ENCODE measurements at regions of chr2 and their contacts with region 1.

Region 1: GRCh38 chr2:34474646-34475045 is 875.5 kb upstream of the FAM98A start:
- DNase-seq: no peak
- ATAC-seq: no peak
- H3K4me3 ChIP-seq: no peak overlapping the region
- H3K27ac ChIP-seq: no peak overlapping the region
- H3K4me1 ChIP-seq: no peaks in the 10 kb centered on the region
- H3K27me3 ChIP-seq: no peaks in the 10 kb centered on the region
- CTCF ChIP-seq: no peak
- EP300 ChIP-seq: no peak
- POLR2A ChIP-seq: no peak
- RAD21 ChIP-seq: no peak

Region 2: GRCh38 chr2:34492561-34493455 is 18.2 kb after region 1 on chr2:
- CTCF ChIA-PET with region 1: no interaction called
- POLR2A ChIA-PET with region 1: no interaction called
- RAD21 ChIA-PET with region 1: no interaction called
- SMC1A ChIA-PET with region 1: no interaction called
- in situ Hi-C with region 1: no loop called
- intact Hi-C with region 1: no loop called
- DNase-seq: no peak
- ATAC-seq: peak; percentile 75
- H3K4me3 ChIP-seq: no peak overlapping the region
- H3K27ac ChIP-seq: no peak overlapping the region
- H3K4me1 ChIP-seq: no peaks in the 10 kb centered on the region
- H3K27me3 ChIP-seq: no peaks in the 10 kb centered on the region
- CTCF ChIP-seq: no peak
- EP300 ChIP-seq: no peak
- POLR2A ChIP-seq: no peak
- RAD21 ChIP-seq: no peak

Region 3: GRCh38 chr2:34519659-34520058 is 45.0 kb after region 1 on chr2:
- CTCF ChIA-PET with region 1: no interaction called
- POLR2A ChIA-PET with region 1: no interaction called
- RAD21 ChIA-PET with region 1: no interaction called
- SMC1A ChIA-PET with region 1: no interaction called
- in situ Hi-C with region 1: loop called (anchors 5 kb)
- intact Hi-C with region 1: no loop called
- DNase-seq: no peak
- ATAC-seq: no peak
- H3K4me3 ChIP-seq: no peak overlapping the region
- H3K27ac ChIP-seq: no peak overlapping the region
- H3K4me1 ChIP-seq: no peaks in the 10 kb centered on the region
- H3K27me3 ChIP-seq: no peaks in the 10 kb centered on the region
- CTCF ChIP-seq: no peak
- EP300 ChIP-seq: no peak
- POLR2A ChIP-seq: no peak
- RAD21 ChIP-seq: no peak

Region 4: GRCh38 chr2:34547340-34547739 is 72.7 kb after region 1 on chr2:
- CTCF ChIA-PET with region 1: no interaction called
- POLR2A ChIA-PET with region 1: no interaction called
- RAD21 ChIA-PET with region 1: no interaction called
- SMC1A ChIA-PET with region 1: no interaction called
- in situ Hi-C with region 1: no loop called
- intact Hi-C with region 1: no loop called
- DNase-seq: no peak
- ATAC-seq: peak; percentile 46; the same call in 2 of the 3 replicates
- H3K4me3 ChIP-seq: no peak overlapping the region
- H3K27ac ChIP-seq: no peak overlapping the region
- H3K4me1 ChIP-seq: no peaks in the 10 kb centered on the region
- H3K27me3 ChIP-seq: no peaks in the 10 kb centered on the region
- CTCF ChIP-seq: no peak
- EP300 ChIP-seq: no peak
- POLR2A ChIP-seq: no peak
- RAD21 ChIP-seq: no peak